Thyroid gland (tissue), 4 donors: ENCODE measurements at regions of chr3 and their contacts with region 1.

Region 1: DNA sequence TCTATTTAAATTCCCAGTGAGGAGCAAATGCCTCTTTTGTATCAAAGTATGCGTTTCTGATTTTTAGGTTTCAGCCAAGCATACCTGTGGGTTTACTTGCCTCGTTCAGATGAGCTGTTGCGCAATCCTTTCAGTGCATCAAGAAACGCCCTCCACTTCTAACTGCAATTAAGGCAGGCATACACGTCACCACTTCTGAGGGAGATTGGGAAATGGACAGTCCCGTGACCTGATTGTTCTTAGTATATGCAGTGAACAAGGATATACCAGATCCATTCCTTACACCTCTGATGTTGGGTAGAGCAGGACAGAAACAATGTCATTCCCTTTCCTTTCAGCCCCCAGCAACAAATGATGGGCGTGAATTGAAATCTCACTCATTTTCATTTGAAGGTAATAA is 219.0 kb downstream of the ITPR1 start:
- DNase-seq: peak; percentile 62 to 71
- H3K4me3 ChIP-seq: no peak overlapping the region
- H3K27ac ChIP-seq: peak overlapping the region; percentile 6 to 89 (median 86)
- H3K4me1 ChIP-seq: peaks cover 10 to 30% of the 10 kb centered on the region in 2 donors
- H3K27me3 ChIP-seq: no peaks in the 10 kb centered on the region
- CTCF ChIP-seq: no peak
- POLR2A ChIP-seq: peak in 1 of 2 donors; percentile 31

Region 2: DNA sequence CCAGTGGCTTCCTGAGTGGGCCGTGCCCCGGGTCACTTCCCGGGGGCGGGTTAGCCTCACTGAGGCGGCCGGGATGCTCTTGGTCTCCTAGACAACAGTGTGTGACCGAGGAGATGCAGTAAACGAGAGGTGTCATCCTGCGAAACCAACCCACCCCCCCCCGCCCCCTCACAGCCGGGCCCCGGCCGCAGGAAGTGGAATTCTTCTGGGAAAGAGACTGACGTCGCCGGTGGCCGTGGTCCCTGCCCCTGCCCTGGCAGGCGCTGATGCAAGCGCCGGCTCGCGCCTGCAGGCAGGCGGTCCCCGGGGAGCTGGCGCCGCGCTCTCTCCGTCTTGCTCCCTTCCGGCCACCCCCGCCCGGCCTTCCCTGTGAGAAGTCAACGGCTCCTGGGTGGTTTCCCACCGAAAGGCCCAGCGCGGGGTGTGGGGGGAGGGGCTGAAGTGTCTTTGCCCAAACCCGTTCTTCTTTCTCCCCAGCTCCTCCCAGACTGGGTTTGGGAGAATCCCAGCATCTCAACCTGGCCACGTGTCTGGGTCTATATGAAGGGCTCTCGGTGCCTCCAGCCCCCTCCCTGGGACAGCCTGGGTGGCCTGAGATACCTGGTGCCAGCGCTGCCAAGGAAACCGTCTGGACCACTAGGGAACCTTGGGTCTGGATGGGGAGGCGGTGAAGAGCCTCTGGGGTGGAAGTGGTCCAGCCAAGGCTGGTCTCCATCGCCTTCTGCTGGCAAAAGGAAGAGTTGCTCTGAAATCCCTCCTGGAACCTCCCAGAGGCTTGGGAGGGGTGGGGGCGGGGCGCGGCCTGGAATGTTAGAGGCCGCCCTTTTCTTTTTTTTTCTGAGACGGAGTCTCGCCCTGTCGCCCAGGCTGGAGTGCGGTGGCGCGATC is 314.4 kb after region 1 on chr3:
- intact Hi-C with region 1: loop called (anchors 10 kb)
- DNase-seq: peak; percentile 85 to 86
- H3K4me3 ChIP-seq: peak overlapping the region in 1 of 3 donors; percentile 26
- H3K27ac ChIP-seq: peak overlapping the region; percentile 60 to 66 (median 65)
- H3K4me1 ChIP-seq: peaks cover 0 to 5% of the 10 kb centered on the region in 2 donors
- H3K27me3 ChIP-seq: no peaks in the 10 kb centered on the region
- CTCF ChIP-seq: peak; percentile 47 to 84 (median 78)
- POLR2A ChIP-seq: no peak

Region 3: GRCh38 chr3:5057857-5058324 is 345.7 kb after region 1 on chr3:
- intact Hi-C with region 1: loop called (anchors 2 kb)
- DNase-seq: peak; percentile 83 to 85
- H3K4me3 ChIP-seq: no peak overlapping the region
- H3K27ac ChIP-seq: no peak overlapping the region
- H3K4me1 ChIP-seq: no peaks in the 10 kb centered on the region
- H3K27me3 ChIP-seq: no peaks in the 10 kb centered on the region
- CTCF ChIP-seq: peak; percentile 21 to 89 (median 82)
- POLR2A ChIP-seq: no peak

Region 4: GRCh38 chr3:5122030-5122740 is 410.0 kb after region 1 on chr3 and contains the start of gene ARL8B:
- intact Hi-C with region 1: loop called (anchors 5 kb)
- DNase-seq: peak; percentile 89 to 91
- H3K4me3 ChIP-seq: peak within 1 kb of the TSS; percentile 82 to 93 (median 84)
- H3K27ac ChIP-seq: peak within 1 kb of the TSS; percentile 86 to 92 (median 87)
- H3K4me1 ChIP-seq: peaks cover 19 to 20% of the 10 kb centered on the region in 2 donors
- H3K27me3 ChIP-seq: no peaks in the 10 kb centered on the region
- CTCF ChIP-seq: peak; percentile 75 to 99 (median 94)
- POLR2A ChIP-seq: peak; percentile 60 to 84
- total RNA-seq, gene ARL8B: 51.2 to 75.9 (median 65.3) TPM